Kidney (tissue), 22 donors: ENCODE measurements at regions of chr12 and their contacts with region 1.

Region 1: GRCh38 chr12:52506858-52507715 is 13.1 kb downstream of the KRT5 start:
- DNase-seq: peak in 2 of 5 donors; percentile 32 to 62
- H3K4me3 ChIP-seq: no peak overlapping the region
- H3K27ac ChIP-seq: no peak overlapping the region
- H3K4me1 ChIP-seq: no peaks in the 10 kb centered on the region
- H3K27me3 ChIP-seq: no peaks in the 10 kb centered on the region
- CTCF ChIP-seq: peak; percentile 32

Region 2: DNA sequence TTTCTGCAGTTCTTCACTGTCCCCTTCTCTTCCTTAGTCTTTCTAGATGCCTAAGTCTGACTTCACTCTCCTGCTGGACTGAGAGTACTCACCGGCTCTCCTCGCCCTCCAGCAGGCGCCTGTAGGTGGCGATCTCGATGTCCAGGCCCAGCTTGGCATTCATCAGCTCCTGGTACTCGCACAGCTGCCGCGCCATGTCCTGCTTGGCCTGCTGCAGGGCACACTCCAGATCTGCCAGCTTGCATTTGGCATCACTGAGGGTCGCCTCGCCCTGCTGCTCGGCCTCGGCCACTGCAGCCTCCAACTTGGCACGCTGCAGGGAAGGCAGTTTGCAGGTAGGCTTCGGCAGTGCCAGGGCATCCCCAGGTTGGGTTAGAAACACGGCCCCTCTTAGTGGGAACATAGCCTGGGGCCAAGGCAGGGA is 126.8 kb before region 1 on chr12:
- intact Hi-C with region 1: loop called (anchors 10 kb)
- DNase-seq: peak in 2 of 5 donors; percentile 40 to 50
- H3K4me3 ChIP-seq: no peak overlapping the region
- H3K27ac ChIP-seq: no peak overlapping the region
- H3K4me1 ChIP-seq: no peaks in the 10 kb centered on the region
- H3K27me3 ChIP-seq: no peaks in the 10 kb centered on the region
- CTCF ChIP-seq: peak; percentile 29

Region 3: GRCh38 chr12:52436000-52436827 is 70.9 kb before region 1 on chr12:
- intact Hi-C with region 1: no loop called
- DNase-seq: no peak
- H3K4me3 ChIP-seq: no peak overlapping the region
- H3K27ac ChIP-seq: no peak overlapping the region
- H3K4me1 ChIP-seq: no peaks in the 10 kb centered on the region
- H3K27me3 ChIP-seq: no peaks in the 10 kb centered on the region
- CTCF ChIP-seq: no peak